Sigmoid colon (tissue), 7 donors: ENCODE measurements at regions of chr10 and their contacts with region 1.

Region 1: GRCh38 chr10:3887885-3888476 is 103.0 kb upstream of the KLF6 start:
- DNase-seq: peak; percentile 83
- H3K4me3 ChIP-seq: no peak overlapping the region
- H3K27ac ChIP-seq: peak overlapping the region; percentile 84 to 93 (median 89)
- H3K4me1 ChIP-seq: peaks cover 0 to 31% (median 24%) of the 10 kb centered on the region in 4 donors
- H3K27me3 ChIP-seq: no peaks in the 10 kb centered on the region
- CTCF ChIP-seq: no peak
- EP300 ChIP-seq: peak in 2 of 4 donors; percentile 77 to 92
- POLR2A ChIP-seq: no peak

Region 2: GRCh38 chr10:3852147-3852904 is 35.7 kb before region 1 on chr10:
- intact Hi-C with region 1: loop called (anchors 5 kb)
- DNase-seq: peak; percentile 93
- H3K4me3 ChIP-seq: no peak overlapping the region
- H3K27ac ChIP-seq: peak overlapping the region; percentile 79 to 90 (median 88)
- H3K4me1 ChIP-seq: peaks cover 0 to 38% (median 25%) of the 10 kb centered on the region in 4 donors
- H3K27me3 ChIP-seq: no peaks in the 10 kb centered on the region
- CTCF ChIP-seq: no peak
- EP300 ChIP-seq: peak; percentile 12 to 90 (median 60)
- POLR2A ChIP-seq: peak in 1 of 2 donors; percentile 13

Region 3: DNA sequence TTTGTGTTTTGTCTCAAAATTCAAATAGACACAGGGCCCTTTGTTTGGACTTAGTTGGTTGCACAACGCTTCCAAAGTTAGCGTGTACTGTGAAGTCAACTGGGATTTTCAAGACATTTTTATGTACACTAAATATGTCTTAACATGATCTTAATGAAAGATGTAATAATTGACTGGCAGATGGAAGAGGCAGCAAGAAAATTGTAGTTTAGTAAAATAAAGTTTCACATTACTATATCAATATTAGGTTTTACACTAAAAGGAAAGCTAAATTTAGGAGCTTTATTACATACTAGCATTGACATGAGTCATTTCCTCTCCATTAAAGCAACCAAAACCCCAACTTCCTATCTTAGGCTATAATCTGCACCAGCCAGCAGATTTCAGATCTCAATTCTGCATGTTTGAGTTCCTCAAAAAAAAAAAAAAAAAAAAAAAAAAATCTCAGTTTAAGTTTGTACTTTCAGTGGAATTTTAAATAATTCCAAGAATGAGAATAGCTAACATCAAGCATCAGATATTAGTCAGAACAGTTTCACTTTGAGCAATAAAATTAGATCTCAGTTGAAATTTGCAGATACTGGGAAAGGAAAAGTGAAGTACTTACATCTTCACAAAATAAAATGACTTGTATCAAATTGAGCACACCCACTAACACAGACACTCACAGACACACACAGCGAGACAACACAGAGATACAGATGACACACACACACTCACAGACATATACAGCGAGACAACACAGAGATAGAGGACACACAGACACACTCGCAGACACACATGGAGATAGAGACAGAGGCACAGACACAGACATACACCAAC is 243.6 kb after region 1 on chr10:
- intact Hi-C with region 1: no loop called
- DNase-seq: no peak
- H3K4me3 ChIP-seq: no peak overlapping the region
- H3K27ac ChIP-seq: peak overlapping the region; percentile 17 to 59 (median 37)
- H3K4me1 ChIP-seq: peaks cover 0 to 7% (median 3%) of the 10 kb centered on the region in 4 donors
- H3K27me3 ChIP-seq: no peaks in the 10 kb centered on the region
- CTCF ChIP-seq: no peak
- EP300 ChIP-seq: no peak
- POLR2A ChIP-seq: no peak

Region 4: GRCh38 chr10:4241724-4242345 is 353.9 kb after region 1 on chr10:
- intact Hi-C with region 1: loop called (anchors 10 kb)
- DNase-seq: no peak
- H3K4me3 ChIP-seq: peak overlapping the region in 3 of 4 donors; percentile 31 to 47 (median 34)
- H3K27ac ChIP-seq: peak overlapping the region; percentile 82 to 88 (median 87)
- H3K4me1 ChIP-seq: peaks cover 0 to 57% (median 32%) of the 10 kb centered on the region in 4 donors
- H3K27me3 ChIP-seq: no peaks in the 10 kb centered on the region
- CTCF ChIP-seq: no peak
- EP300 ChIP-seq: peak in 3 of 4 donors; percentile 49 to 87 (median 51)
- POLR2A ChIP-seq: no peak

Region 5: GRCh38 chr10:4344511-4344994 is 456.6 kb after region 1 on chr10:
- intact Hi-C with region 1: loop called (anchors 10 kb)
- DNase-seq: peak; percentile 90
- H3K4me3 ChIP-seq: no peak overlapping the region
- H3K27ac ChIP-seq: peak overlapping the region; percentile 45 to 85 (median 79)
- H3K4me1 ChIP-seq: peaks cover 0 to 31% (median 28%) of the 10 kb centered on the region in 4 donors
- H3K27me3 ChIP-seq: no peaks in the 10 kb centered on the region
- CTCF ChIP-seq: peak in 1 of 4 experiments; percentile 23
- EP300 ChIP-seq: peak in 3 of 4 donors; percentile 7 to 87 (median 54)
- POLR2A ChIP-seq: no peak